PC-9 (cell line): ENCODE measurements at regions of chr6 and their contacts with region 1.

Region 1: GRCh38 chr6:154491567-154492443 is 18.7 kb downstream of the CNKSR3 start:
- DNase-seq: no peak
- H3K4me3 ChIP-seq: no peak overlapping the region
- H3K27ac ChIP-seq: no peak overlapping the region
- H3K4me1 ChIP-seq: no peaks in the 10 kb centered on the region
- H3K27me3 ChIP-seq: no peaks in the 10 kb centered on the region
- CTCF ChIP-seq: no peak

Region 2: DNA sequence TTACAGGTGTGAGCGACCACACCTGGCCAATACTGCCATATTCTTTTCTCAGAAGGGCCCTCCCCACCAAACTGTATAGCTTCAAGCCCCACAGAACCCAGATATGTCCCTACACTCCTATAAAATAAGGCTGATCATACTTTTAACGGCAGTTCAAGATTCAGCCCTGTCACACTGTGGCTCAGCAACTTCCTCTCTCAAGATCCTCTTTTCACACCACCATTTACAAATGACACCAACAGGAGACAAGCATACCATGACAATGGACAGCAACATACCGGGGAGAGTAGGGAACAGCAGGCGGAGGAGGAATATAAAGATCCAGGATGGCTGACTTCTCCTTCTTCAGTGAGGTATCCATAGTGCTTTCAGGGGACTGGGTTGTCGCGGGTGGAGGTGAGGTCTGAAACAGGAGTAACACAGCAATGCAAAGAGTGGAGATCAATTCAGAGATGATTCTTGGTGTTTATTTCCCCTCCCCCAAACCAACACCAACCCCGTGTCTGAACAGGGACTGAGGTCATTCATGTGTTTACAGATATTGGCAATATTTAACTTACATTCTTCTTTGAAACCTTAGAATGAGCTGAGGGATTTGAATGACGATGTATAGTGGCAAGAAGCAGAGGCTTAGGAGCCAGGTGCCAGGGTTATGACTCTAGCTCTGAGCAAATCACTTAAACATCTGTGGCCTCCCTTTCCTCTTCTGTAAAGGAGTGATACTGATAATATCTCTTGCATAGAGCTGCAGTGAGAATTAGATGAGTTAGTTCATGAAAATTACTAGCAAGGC is 77.6 kb before region 1 on chr6:
- CTCF ChIA-PET with region 1: no interaction called
- POLR2A ChIA-PET with region 1: no interaction called
- intact Hi-C with region 1: no loop called
- DNase-seq: peak in 1 of 2 experiments; percentile 35
- H3K4me3 ChIP-seq: no peak overlapping the region
- H3K27ac ChIP-seq: no peak overlapping the region
- H3K4me1 ChIP-seq: peaks cover 17% of the 10 kb centered on the region
- H3K27me3 ChIP-seq: no peaks in the 10 kb centered on the region
- CTCF ChIP-seq: no peak

Region 3: GRCh38 chr6:154463573-154464419 is 28.0 kb before region 1 on chr6:
- CTCF ChIA-PET with region 1: no interaction called
- POLR2A ChIA-PET with region 1: interaction called, 10 read pairs
- intact Hi-C with region 1: no loop called
- DNase-seq: no peak
- H3K4me3 ChIP-seq: no peak overlapping the region
- H3K27ac ChIP-seq: no peak overlapping the region
- H3K4me1 ChIP-seq: no peaks in the 10 kb centered on the region
- H3K27me3 ChIP-seq: no peaks in the 10 kb centered on the region
- CTCF ChIP-seq: no peak